ENCODE measurements at regions of chr9 and their contacts with region 1.

Region 1: GRCh38 chr9:96136992-96137670 is 164.8 kb downstream of the HSD17B3 start:
- DNase-seq: peak; percentile 69
- ATAC-seq: peak; percentile 98
- H3K4me3 ChIP-seq: peak overlapping the region; percentile 21; the same call in 1 of the 2 replicates
- H3K27ac ChIP-seq: peak overlapping the region; percentile 66
- H3K4me1 ChIP-seq: peaks cover 21% of the 10 kb centered on the region
- H3K27me3 ChIP-seq: no peaks in the 10 kb centered on the region
- CTCF ChIP-seq: no peak
- EP300 ChIP-seq: no peak
- POLR2A ChIP-seq: peak; percentile 51; the same call in 1 of the 2 replicates
- RAD21 ChIP-seq: no peak

Region 2: DNA sequence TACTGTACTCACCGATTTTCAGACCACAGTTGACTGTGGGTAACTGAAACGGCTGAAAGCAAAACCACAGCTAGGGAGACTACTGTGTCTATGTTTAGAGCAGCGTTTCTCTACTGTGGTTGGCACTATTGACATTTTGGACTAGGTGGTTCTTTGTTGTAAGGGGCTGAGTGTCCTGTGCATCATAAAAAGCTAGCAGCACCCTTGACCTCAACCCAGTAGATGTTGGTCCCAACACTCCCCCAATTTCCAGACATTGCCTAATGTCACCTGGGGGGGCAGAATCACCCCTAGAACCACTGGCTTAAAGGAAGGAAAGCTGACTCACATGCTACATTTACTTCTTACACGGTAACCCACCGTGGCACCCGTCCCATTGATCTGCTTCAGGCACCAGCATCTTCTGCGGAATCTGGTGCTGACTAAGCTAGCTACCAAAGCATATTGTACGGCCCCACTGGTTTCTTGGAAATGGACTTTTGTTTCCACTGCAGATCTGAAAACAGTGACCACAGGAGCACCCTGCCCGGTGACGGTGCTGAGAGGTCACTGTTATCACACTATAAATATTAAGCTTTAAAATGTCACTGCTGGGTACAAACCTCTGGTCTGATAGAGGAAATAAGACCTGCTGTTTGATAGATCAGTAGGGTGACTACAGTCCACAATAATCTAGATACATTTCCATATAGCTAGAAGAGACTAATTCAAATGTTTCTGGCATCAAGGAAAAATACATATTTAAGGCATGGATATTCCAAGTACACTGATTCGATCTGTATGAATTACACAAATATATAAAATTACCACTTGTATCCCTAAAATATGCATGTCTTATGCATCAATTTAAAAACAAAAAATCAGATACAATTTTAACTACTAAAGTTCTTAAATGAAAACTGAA is 13.4 kb after region 1 on chr9:
- CTCF ChIA-PET with region 1: interaction called, 3 read pairs
- POLR2A ChIA-PET with region 1: interaction called, 4 read pairs
- RAD21 ChIA-PET with region 1: interaction called, 22 read pairs
- SMC1A ChIA-PET with region 1: interaction called, 21 read pairs
- in situ Hi-C with region 1: no loop called
- intact Hi-C with region 1: no loop called
- DNase-seq: peak; percentile 57
- ATAC-seq: peak; percentile 93
- H3K4me3 ChIP-seq: peak overlapping the region; percentile 49
- H3K27ac ChIP-seq: peak overlapping the region; percentile 4; the same call in 1 of the 2 replicates
- H3K4me1 ChIP-seq: peaks cover 30% of the 10 kb centered on the region
- H3K27me3 ChIP-seq: 0 out of 4 replicates have a peak, but pooled peaks cover 0 to 4% of the 10 kb centered on the region in 2 experiments
- CTCF ChIP-seq: no peak
- EP300 ChIP-seq: 0 out of 4 replicates have a peak, but pooled peaks have one; percentile 12 to 32
- POLR2A ChIP-seq: no peak
- RAD21 ChIP-seq: no peak